Activated CD4-positive, alpha-beta T cell treated with anti-CD3 and anti-CD28 coated beads for 36 hours (primary cell): ENCODE measurements at regions of chr6 and their contacts with region 1.

Region 1: DNA sequence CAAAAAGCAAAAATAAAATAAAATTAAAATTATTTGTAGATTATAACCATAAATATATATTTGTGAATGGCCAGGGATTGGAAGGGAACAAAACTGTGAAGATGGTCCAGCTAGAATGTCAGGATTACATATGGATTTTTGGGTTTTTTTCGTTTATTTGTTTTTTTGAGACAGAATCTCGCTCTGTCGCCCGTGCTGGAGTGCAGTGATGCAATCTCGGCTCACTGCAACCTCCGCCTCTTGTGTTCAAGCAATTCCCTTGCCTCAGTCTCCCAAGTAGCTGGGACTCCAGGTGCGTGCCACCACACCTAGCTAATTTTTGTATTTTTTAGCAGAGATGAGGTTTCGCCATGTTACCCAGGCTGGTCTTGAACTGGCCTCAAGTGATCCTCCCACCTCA is 7.8 kb upstream of the C6orf132 start:
- DNase-seq: no peak
- ATAC-seq: no peak
- H3K4me3 Mint-ChIP-seq: no peak overlapping the region
- H3K27ac Mint-ChIP-seq: no peak overlapping the region
- H3K4me1 Mint-ChIP-seq: no peaks in the 10 kb centered on the region
- H3K27me3 Mint-ChIP-seq: peaks cover 2% of the 10 kb centered on the region

Region 2: GRCh38 chr6:42066156-42066555 is 84.1 kb before region 1 on chr6:
- CTCF ChIA-PET with region 1: no interaction called
- POLR2A ChIA-PET with region 1: no interaction called
- intact Hi-C with region 1: no loop called
- DNase-seq: no peak
- ATAC-seq: no peak
- H3K4me3 Mint-ChIP-seq: no peak overlapping the region
- H3K27ac Mint-ChIP-seq: no peak overlapping the region
- H3K4me1 Mint-ChIP-seq: no peaks in the 10 kb centered on the region
- H3K27me3 Mint-ChIP-seq: no peaks in the 10 kb centered on the region

Region 3: GRCh38 chr6:42188406-42188805 is 38.2 kb after region 1 on chr6:
- CTCF ChIA-PET with region 1: interaction called, 3 read pairs
- POLR2A ChIA-PET with region 1: no interaction called
- intact Hi-C with region 1: loop called in 1 of 2 experiments (anchors 2 kb)
- DNase-seq: no peak
- ATAC-seq: no peak
- H3K4me3 Mint-ChIP-seq: no peak overlapping the region
- H3K27ac Mint-ChIP-seq: no peak overlapping the region
- H3K4me1 Mint-ChIP-seq: no peaks in the 10 kb centered on the region
- H3K27me3 Mint-ChIP-seq: no peaks in the 10 kb centered on the region